Activated T-helper 2 cell treated with anti-CD3 and anti-CD28 coated beads, Interferon-gamma antibody, Interleukin-2, Interleukin-4, amounts not matched to agents 10 μg/mL and 5 μg/mL and 100 μg/mL, durations not matched to agents 14 hours and 24 hours and 36 hours (primary cell): ENCODE measurements at regions of chr6 and their contacts with region 1.

Region 1: GRCh38 chr6:72084992-72085569 is 198.7 kb downstream of the RIMS1 start:
- DNase-seq: no peak
- H3K4me3 Mint-ChIP-seq: no peak overlapping the region
- H3K27ac Mint-ChIP-seq: no peak overlapping the region
- H3K4me1 Mint-ChIP-seq: no peaks in the 10 kb centered on the region
- H3K27me3 Mint-ChIP-seq: no peaks in the 10 kb centered on the region

Region 2: GRCh38 chr6:71383901-71384489 is 701.1 kb before region 1 on chr6:
- intact Hi-C with region 1: loop called (anchors 2 kb)
- DNase-seq: no peak
- H3K4me3 Mint-ChIP-seq: no peak overlapping the region
- H3K27ac Mint-ChIP-seq: no peak overlapping the region
- H3K4me1 Mint-ChIP-seq: peaks cover 1% of the 10 kb centered on the region
- H3K27me3 Mint-ChIP-seq: peaks cover 7% of the 10 kb centered on the region

Region 3: GRCh38 chr6:71533939-71534379 is 551.1 kb before region 1 on chr6:
- intact Hi-C with region 1: loop called (anchors 5 kb)
- DNase-seq: no peak
- H3K4me3 Mint-ChIP-seq: no peak overlapping the region
- H3K27ac Mint-ChIP-seq: no peak overlapping the region
- H3K4me1 Mint-ChIP-seq: no peaks in the 10 kb centered on the region
- H3K27me3 Mint-ChIP-seq: no peaks in the 10 kb centered on the region

Region 4: DNA sequence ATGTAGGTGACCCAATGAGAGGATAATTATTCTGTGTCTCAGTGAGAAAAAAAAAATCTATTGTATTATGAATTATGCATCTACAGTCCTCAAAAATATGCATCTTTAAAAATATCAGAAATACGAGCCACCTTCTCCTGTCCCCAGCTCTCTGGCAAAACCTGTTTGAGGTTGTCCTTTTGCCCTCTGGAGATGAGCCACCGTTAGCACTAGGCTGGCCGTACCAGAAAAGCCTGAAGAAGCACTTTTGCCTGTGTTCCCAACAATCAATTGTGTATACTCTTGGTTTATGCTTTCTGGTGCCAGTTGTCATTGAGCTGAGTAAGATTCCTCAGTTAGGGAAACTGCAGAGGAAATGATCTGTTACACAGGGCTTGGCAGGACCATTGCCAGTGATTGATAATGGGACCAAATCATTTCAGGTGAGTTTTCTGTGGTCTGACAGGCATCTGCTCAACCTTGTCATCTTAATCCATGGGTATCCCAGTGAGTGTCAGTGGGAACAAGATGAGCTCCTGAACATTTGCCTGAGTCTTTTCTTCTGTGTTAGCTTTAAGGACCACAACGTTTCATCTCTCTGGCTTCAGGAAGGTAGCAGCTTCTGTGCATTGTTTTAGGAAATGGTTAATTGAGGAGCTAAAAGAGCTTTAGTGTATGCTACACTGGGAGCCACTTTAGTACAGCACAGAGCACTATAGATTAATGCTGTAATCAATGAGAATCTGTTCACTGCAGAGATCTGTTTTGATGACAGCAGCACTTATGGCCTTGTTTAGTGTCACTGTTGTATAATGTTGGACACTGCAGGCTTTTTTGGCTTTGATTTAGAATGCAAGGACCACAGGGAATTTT is 131.4 kb after region 1 on chr6:
- intact Hi-C with region 1: no loop called
- DNase-seq: no peak
- H3K4me3 Mint-ChIP-seq: no peak overlapping the region
- H3K27ac Mint-ChIP-seq: no peak overlapping the region
- H3K4me1 Mint-ChIP-seq: no peaks in the 10 kb centered on the region
- H3K27me3 Mint-ChIP-seq: no peaks in the 10 kb centered on the region